ENCODE measurements at regions of chr15 and their contacts with region 1.

Region 1: DNA sequence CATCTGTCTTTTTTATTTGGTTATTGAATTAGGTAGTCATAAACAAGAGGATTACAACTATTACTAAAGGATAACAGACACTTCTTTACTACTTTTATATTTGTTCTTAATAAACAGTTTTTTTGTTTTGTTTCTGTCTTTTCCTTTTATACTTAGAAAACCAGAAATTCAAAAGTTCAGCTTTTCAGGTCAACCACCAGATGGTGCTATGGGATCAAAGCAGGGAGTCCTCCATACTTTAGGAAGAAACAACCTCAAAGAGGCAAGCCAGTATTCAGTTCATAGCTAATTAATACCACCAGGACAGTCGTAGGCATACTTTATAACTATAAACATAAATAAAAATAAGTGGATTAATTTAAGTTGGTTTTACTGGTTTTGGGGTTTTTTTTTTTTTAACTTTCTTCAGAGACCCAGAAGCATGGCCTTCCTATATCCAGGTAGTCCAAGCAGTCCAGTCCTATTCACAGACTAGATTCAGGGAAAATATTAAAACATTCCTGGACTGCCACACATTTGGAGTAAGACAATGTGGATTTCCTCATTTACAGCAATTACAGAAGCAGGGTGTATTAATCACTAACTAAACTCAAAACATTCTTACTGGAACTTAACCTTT is 16.0 kb upstream of the EID1 start:
- DNase-seq: peak; percentile 68
- ATAC-seq: peak; percentile 29; the same call in 1 of the 2 replicates
- H3K4me3 ChIP-seq: no peak overlapping the region
- H3K27ac ChIP-seq: peak overlapping the region; percentile 58
- H3K4me1 ChIP-seq: peaks cover 40% of the 10 kb centered on the region
- H3K27me3 ChIP-seq: no peaks in the 10 kb centered on the region
- CTCF ChIP-seq: peak; percentile 88

Region 2: GRCh38 chr15:48963524-48964113 is 101.7 kb after region 1 on chr15 and contains the start of gene SHC4:
- CTCF ChIA-PET with region 1: interaction called, 12 read pairs
- POLR2A ChIA-PET with region 1: no interaction called
- intact Hi-C with region 1: loop called (anchors 1 kb)
- DNase-seq: peak; percentile 75
- ATAC-seq: peak; percentile 48
- H3K4me3 ChIP-seq: peak within 1 kb of the TSS; percentile 81
- H3K27ac ChIP-seq: peak within 1 kb of the TSS; percentile 89
- H3K4me1 ChIP-seq: peaks cover 34% of the 10 kb centered on the region
- H3K27me3 ChIP-seq: no peaks in the 10 kb centered on the region
- CTCF ChIP-seq: peak; percentile 47
- total RNA-seq, gene SHC4: 2.4 and 4.3 TPM in 2 replicates

Region 3: DNA sequence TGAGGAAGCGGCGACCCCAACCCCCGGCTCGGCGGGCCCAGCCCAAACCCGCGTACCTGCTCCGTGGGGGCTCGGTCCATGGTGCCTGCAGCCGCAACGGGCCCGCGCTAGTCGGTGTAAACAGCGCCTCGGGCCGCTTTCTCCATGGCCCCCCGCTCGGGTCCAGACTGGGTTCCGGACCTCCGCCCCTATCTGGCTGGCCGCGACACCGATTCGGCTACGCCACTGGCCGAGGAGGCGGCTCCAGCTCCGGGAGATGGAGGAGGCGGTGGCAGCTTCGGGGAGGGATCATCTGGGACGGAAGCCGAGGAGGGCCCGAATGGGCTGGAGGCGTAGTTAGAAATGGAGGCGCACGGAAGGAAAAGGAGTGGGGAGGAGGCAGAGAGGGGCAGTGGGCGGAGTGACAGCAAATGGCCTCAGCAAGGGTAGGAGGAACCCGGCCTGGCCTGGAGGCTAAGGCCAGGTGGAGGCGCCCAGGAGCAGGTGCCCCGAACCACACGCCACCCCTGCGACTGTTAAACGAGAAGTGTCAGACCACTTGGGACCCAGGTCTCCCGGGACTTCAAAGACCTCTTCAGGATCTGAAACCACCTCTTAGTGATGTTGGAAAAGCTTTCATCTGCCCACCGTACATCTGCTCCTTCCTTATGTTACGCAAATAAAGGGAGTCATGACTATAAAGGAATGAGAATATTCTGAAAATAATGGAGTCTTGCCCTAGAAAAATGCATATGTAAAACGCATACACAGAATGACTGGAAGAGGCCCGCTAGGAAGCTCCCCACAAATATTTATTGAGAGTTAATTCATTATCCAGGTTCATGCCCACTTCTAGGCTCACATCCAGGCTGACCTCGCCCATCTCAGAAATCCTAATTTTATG is 184.5 kb after region 1 on chr15 and contains the start of gene SECISBP2L:
- CTCF ChIA-PET with region 1: interaction called, 3 read pairs
- POLR2A ChIA-PET with region 1: no interaction called
- intact Hi-C with region 1: loop called (anchors 5 kb)
- DNase-seq: peak; percentile 89
- ATAC-seq: peak; percentile 90
- H3K4me3 ChIP-seq: peak within 1 kb of the TSS; percentile 99
- H3K27ac ChIP-seq: peak within 1 kb of the TSS; percentile 23; the same call in 1 of the 2 replicates
- H3K4me1 ChIP-seq: peaks cover 15% of the 10 kb centered on the region
- H3K27me3 ChIP-seq: no peaks in the 10 kb centered on the region
- CTCF ChIP-seq: peak; percentile 50
- total RNA-seq, gene SECISBP2L: 13.6 and 18.6 TPM in 2 replicates

Region 4: GRCh38 chr15:49421991-49422390 is 560.1 kb after region 1 on chr15:
- CTCF ChIA-PET with region 1: no interaction called
- POLR2A ChIA-PET with region 1: no interaction called
- intact Hi-C with region 1: loop called (anchors 5 kb)
- DNase-seq: peak; percentile 68
- ATAC-seq: peak; percentile 53
- H3K4me3 ChIP-seq: no peak overlapping the region
- H3K27ac ChIP-seq: no peak overlapping the region
- H3K4me1 ChIP-seq: no peaks in the 10 kb centered on the region
- H3K27me3 ChIP-seq: no peaks in the 10 kb centered on the region
- CTCF ChIP-seq: peak; percentile 79